Endothelial cell of umbilical vein (primary cell): ENCODE measurements at regions of chrX and their contacts with region 1.

Region 1: DNA sequence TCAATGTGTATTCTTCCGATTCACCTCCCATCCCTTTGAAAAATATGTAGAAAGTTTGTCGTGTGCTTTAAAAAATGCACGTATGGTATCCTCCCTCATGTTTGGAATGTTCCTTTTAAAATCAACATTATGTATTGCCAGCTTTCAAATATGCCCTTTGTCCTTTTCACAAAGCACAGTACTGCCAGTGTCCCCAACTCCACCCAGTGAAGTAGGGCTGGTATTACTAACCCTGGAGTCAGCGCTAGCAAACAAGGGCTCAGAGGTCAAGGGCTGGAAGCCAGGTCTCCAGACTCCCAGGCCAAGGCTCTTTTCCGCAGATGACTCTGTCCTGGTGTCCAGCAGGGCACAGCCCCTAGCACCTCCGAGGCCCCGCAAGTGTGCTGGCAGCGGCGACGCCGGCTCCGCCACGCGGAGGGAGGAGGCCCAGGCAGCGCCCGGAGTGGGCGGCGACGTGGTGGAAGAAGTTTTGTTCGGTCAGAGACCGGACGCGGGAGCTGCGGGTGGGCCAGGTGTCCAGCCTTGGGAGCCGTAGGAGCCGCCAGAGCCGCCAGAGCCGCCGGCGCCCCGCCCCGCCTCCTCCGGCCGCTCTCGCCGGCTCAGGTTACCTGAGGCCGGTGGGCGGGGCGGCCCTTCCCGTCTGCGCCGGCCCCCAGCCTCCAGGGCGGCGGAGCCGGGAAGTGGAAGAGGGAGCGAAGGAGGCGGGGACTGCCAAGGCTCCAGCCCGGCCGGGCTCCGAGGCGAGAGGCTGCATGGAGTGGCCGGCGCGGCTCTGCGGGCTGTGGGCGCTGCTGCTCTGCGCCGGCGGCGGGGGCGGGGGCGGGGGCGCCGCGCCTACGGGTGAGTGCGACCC is at the start of gene IL13RA1:
- DNase-seq: peak; percentile 86
- H3K4me3 ChIP-seq: peak within 1 kb of the TSS; percentile 60 to 75 (median 71)
- H3K27ac ChIP-seq: peak within 1 kb of the TSS; percentile 80
- H3K4me1 ChIP-seq: peaks cover 37% of the 10 kb centered on the region
- H3K27me3 ChIP-seq: no peaks in the 10 kb centered on the region
- CTCF ChIP-seq: no peak
- POLR2A ChIP-seq: peak; percentile 50
- total RNA-seq, gene IL13RA1: 61.9 and 66.4 TPM in 2 replicates

Region 2: GRCh38 chrX:118644378-118644777 is 82.7 kb before region 1 on chrX:
- CTCF ChIA-PET with region 1: interaction called, 8 read pairs
- POLR2A ChIA-PET with region 1: no interaction called
- dilution Hi-C with region 1: no loop called
- intact Hi-C with region 1: loop called (anchors 1 kb)
- DNase-seq: peak; percentile 59
- H3K4me3 ChIP-seq: no peak overlapping the region
- H3K27ac ChIP-seq: no peak overlapping the region
- H3K4me1 ChIP-seq: no peaks in the 10 kb centered on the region
- H3K27me3 ChIP-seq: no peaks in the 10 kb centered on the region
- CTCF ChIP-seq: peak; percentile 11 to 25
- POLR2A ChIP-seq: no peak

Region 3: DNA sequence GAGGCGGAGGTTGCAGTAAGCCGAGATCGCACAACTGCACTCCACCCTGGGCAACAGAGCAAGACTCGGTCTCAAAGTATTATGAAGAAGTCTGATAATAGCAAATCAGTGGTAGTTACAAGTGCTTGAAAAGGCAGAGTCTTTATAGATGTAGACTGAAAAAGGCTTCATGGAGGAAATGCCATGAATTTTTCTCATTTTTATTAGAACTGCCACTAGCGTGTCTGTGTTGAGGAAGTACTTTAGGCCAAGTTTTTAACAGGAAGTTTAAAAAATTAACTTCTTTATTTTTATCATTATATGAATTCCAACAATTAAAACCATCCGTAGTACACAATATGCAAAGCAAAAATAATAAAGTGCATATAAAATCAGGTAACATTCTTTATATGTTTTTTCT is 32.5 kb before region 1 on chrX:
- CTCF ChIA-PET with region 1: no interaction called
- POLR2A ChIA-PET with region 1: no interaction called
- dilution Hi-C with region 1: no loop called
- intact Hi-C with region 1: loop called (anchors 1 kb)
- DNase-seq: peak; percentile 41
- H3K4me3 ChIP-seq: no peak overlapping the region
- H3K27ac ChIP-seq: peak overlapping the region; percentile 37
- H3K4me1 ChIP-seq: peaks cover 24% of the 10 kb centered on the region
- H3K27me3 ChIP-seq: no peaks in the 10 kb centered on the region
- CTCF ChIP-seq: no peak
- POLR2A ChIP-seq: no peak

Region 4: GRCh38 chrX:118751950-118752783 is 25.1 kb after region 1 on chrX:
- CTCF ChIA-PET with region 1: interaction called, 3 read pairs
- POLR2A ChIA-PET with region 1: no interaction called
- dilution Hi-C with region 1: no loop called
- intact Hi-C with region 1: loop called (anchors 1 kb)
- DNase-seq: peak; percentile 60
- H3K4me3 ChIP-seq: no peak overlapping the region
- H3K27ac ChIP-seq: peak overlapping the region; percentile 92
- H3K4me1 ChIP-seq: peaks cover 11% of the 10 kb centered on the region
- H3K27me3 ChIP-seq: no peaks in the 10 kb centered on the region
- CTCF ChIP-seq: no peak
- POLR2A ChIP-seq: no peak

Region 5: GRCh38 chrX:119468930-119469635 is 742.0 kb after region 1 on chrX:
- CTCF ChIA-PET with region 1: no interaction called
- POLR2A ChIA-PET with region 1: no interaction called
- dilution Hi-C with region 1: no loop called
- intact Hi-C with region 1: no loop called
- DNase-seq: peak; percentile 81
- H3K4me3 ChIP-seq: peak overlapping the region; percentile 51 to 89 (median 58)
- H3K27ac ChIP-seq: peak overlapping the region; percentile 87
- H3K4me1 ChIP-seq: peaks cover 5% of the 10 kb centered on the region
- H3K27me3 ChIP-seq: no peaks in the 10 kb centered on the region
- CTCF ChIP-seq: peak; percentile 53 to 71
- POLR2A ChIP-seq: no peak